Cardiac septum (tissue), 1 donor: ENCODE measurements at regions of chr12 and their contacts with region 1.

Region 1: GRCh38 chr12:55619354-55620138 is 17.1 kb upstream of the OR10P1 start:
- DNase-seq: no peak

Region 2: GRCh38 chr12:55188974-55189556 is 430.5 kb before region 1 on chr12:
- intact Hi-C with region 1: loop called (anchors 2 kb)
- DNase-seq: no peak

Region 3: DNA sequence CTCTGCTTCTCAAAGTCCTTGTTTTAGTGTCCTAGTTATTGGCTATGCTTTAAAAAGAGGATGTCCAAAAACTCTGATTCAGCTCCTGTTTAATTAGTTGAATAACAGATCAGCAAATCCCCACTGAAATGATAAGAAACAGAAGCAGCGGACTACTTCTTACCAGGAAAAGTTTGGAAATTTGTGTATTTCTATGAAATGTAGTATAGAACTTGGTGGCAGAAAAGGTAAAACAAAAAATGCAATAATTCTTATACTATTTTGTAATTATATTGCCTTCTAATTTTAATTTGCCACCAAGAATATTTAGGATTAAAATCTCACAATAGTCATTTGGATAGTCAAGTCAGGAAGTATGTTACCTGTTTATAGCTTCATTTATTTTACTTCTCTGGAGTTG is 47.4 kb before region 1 on chr12 and contains the start of gene OR2AP1:
- intact Hi-C with region 1: no loop called
- DNase-seq: no peak
- total RNA-seq, gene OR2AP1: not detected

Region 4: GRCh38 chr12:55771736-55772135 is 152.2 kb after region 1 on chr12:
- intact Hi-C with region 1: no loop called
- DNase-seq: no peak